ENCODE measurements at regions of chr2 and their contacts with region 1.

Region 1: GRCh38 chr2:68185541-68186164 is 28.0 kb downstream of the PNO1 start:
- DNase-seq: peak; percentile 44
- H3K4me3 ChIP-seq: peak overlapping the region in 1 of 2 experiments; percentile 17; a peak in 1 of 4 replicates
- H3K27ac ChIP-seq: no peak overlapping the region
- H3K4me1 ChIP-seq: no peaks in the 10 kb centered on the region; a peak in 1 of 4 replicates
- H3K27me3 ChIP-seq: no peaks in the 10 kb centered on the region
- CTCF ChIP-seq: peak; percentile 75
- EP300 ChIP-seq: no peak
- RAD21 ChIP-seq: peak; percentile 36; the same call in 1 of the 2 replicates

Region 2: GRCh38 chr2:68203587-68203986 is 17.9 kb after region 1 on chr2:
- CTCF ChIA-PET with region 1: interaction called, 14 read pairs
- POLR2A ChIA-PET with region 1: no interaction called
- DNase-seq: no peak
- H3K4me3 ChIP-seq: no peak overlapping the region
- H3K27ac ChIP-seq: peak overlapping the region in 1 of 2 experiments; percentile 56; a peak in 2 of 4 replicates
- H3K4me1 ChIP-seq: peaks cover 6 to 11% of the 10 kb centered on the region in 2 experiments; a peak in 3 of 4 replicates
- H3K27me3 ChIP-seq: no peaks in the 10 kb centered on the region
- CTCF ChIP-seq: no peak
- EP300 ChIP-seq: no peak
- RAD21 ChIP-seq: no peak